ENCODE measurements at regions of chr20 and their contacts with region 1.

Region 1: DNA sequence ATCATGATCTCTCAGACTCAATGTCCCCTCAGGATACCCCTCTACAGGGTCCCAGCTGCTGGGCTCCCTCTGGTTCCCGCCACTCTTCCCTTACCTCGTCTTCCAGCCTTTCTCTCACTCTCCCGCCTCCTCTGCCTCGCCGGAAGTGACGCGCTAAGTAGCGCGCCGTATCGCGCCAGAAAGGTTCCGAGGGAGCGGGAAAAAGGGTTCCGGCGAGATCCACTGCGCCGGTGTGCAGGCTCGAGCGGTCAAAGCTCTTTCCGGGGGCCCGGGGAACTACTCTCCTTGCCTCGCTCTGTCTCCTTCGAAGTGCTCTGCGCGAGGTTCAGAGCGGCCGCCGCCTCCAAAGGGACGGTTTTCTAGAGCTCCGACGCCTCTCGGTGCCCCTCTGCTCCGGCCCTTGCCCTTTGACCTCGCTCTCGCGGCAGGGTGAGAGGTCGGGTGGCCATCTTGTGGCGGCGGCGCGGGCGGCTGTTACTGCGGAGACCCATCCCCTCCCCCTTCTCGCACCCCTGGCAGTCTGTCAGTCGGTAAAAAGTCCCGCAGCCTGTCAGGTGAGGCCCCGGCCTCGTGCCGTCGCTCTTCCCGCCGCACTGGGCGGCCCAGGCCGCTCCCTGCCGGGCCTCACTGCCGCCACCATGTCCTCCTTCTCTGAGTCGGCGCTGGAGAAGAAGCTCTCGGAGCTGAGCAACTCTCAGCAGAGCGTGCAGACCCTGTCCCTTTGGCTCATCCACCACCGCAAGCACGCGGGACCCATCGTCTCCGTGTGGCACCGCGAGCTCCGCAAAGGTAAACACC is at the starts of genes RPRD1B and TTI1:
- H3K4me3 ChIP-seq: peak within 1 kb of the TSS; percentile 90
- H3K27ac ChIP-seq: peak within 1 kb of the TSS; percentile 80
- H3K4me1 ChIP-seq: no peaks in the 10 kb centered on the region
- CTCF ChIP-seq: peak; percentile 60; the same call in 1 of the 2 replicates

Region 2: GRCh38 chr20:38043512-38044300 is 10.2 kb after region 1 on chr20:
- CTCF ChIA-PET with region 1: interaction called, 4 read pairs
- POLR2A ChIA-PET with region 1: interaction called, 12 read pairs
- H3K4me3 ChIP-seq: no peak overlapping the region
- H3K27ac ChIP-seq: no peak overlapping the region
- H3K4me1 ChIP-seq: no peaks in the 10 kb centered on the region
- CTCF ChIP-seq: no peak

Region 3: GRCh38 chr20:38050686-38051085 is 17.2 kb after region 1 on chr20:
- CTCF ChIA-PET with region 1: interaction called, 4 read pairs
- POLR2A ChIA-PET with region 1: interaction called, 12 read pairs
- H3K4me3 ChIP-seq: no peak overlapping the region
- H3K27ac ChIP-seq: no peak overlapping the region
- H3K4me1 ChIP-seq: peaks cover 3% of the 10 kb centered on the region; the same call in 1 of the 2 replicates
- CTCF ChIP-seq: no peak